PC-9 (cell line): ENCODE measurements at regions of chr10 and their contacts with region 1.

Region 1: DNA sequence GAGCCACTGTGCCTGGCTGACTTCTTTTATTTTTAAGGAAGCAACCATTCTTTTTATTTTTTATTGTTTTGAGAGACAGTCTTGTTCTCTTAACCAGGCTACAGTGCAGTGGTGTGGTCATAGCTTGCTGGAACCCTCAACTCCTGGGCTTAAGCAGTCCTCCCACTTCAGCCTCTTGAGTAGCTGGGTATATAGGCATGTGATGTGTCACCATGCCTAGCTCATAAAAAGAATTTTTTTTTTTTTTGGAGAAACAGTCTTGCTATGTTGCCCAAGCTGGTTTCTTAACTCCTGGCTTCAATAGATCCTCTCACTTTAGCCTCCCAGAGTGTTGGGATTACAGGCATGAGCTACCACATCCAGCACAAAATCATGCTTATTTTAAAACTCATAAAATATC is 5.8 kb downstream of the MCU start:
- DNase-seq: no peak
- H3K4me3 ChIP-seq: no peak overlapping the region
- H3K27ac ChIP-seq: no peak overlapping the region
- H3K4me1 ChIP-seq: peaks cover 27% of the 10 kb centered on the region
- H3K27me3 ChIP-seq: no peaks in the 10 kb centered on the region
- CTCF ChIP-seq: no peak

Region 2: GRCh38 chr10:71351628-71352319 is 1345.9 kb before region 1 on chr10:
- CTCF ChIA-PET with region 1: no interaction called
- POLR2A ChIA-PET with region 1: no interaction called
- intact Hi-C with region 1: no loop called
- DNase-seq: no peak
- H3K4me3 ChIP-seq: no peak overlapping the region
- H3K27ac ChIP-seq: no peak overlapping the region
- H3K4me1 ChIP-seq: peaks cover 31% of the 10 kb centered on the region
- H3K27me3 ChIP-seq: no peaks in the 10 kb centered on the region
- CTCF ChIP-seq: no peak

Region 3: DNA sequence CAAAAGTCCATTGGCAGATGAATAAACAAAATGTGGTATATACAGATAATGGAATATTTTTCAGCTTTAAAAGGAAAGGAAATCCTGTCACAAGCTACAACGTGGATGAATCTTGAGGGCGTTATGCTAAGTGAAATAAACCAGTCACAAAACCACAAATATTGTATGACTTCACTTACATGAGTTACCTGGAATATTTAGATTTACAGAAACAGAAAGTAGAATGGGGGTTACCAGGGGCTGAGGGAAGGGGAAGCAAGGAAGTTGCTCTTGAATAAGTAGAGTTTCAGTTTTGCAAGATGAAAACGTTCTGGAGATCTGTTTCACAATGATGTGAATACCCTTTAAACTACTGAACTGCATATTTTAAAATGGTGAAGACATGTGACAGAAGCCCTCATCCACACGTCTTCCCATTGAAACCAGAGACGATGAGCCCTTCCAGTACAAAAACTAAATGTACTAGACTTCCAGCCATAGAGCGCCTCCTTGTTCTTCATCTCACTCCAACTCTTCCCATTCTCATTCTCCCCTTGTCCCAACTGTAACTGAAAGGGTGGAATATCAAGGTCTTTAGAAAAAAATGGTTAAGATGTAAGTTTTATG is 134.3 kb before region 1 on chr10:
- CTCF ChIA-PET with region 1: no interaction called
- POLR2A ChIA-PET with region 1: no interaction called
- intact Hi-C with region 1: no loop called
- DNase-seq: no peak
- H3K4me3 ChIP-seq: no peak overlapping the region
- H3K27ac ChIP-seq: no peak overlapping the region
- H3K4me1 ChIP-seq: no peaks in the 10 kb centered on the region
- H3K27me3 ChIP-seq: no peaks in the 10 kb centered on the region
- CTCF ChIP-seq: no peak

Region 4: DNA sequence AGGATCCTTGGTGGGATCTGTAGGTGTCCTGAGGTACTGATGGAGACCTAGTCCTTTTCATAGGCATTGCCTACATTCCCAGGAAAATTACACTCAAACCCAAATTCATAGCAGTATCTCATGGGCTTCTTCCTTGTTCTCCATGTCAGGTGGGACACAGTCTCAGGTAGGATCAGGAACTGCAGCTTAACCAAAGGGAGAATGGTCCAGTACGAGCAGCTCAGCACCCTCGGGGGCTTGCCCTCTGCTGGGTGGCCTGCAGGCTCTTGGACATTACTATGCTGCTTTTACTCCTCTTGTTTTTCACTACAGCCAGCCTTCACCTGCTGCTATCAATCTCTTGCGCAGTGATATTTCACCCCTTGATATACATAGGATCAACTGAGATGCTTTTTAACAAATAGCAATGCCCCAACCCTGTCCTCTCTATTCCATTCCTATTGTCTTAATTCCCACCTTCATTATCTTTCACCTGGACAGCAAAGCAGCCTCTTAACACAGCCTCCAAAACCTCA is 228.3 kb after region 1 on chr10:
- CTCF ChIA-PET with region 1: interaction called, 10 read pairs
- POLR2A ChIA-PET with region 1: no interaction called
- intact Hi-C with region 1: no loop called
- DNase-seq: no peak
- H3K4me3 ChIP-seq: no peak overlapping the region
- H3K27ac ChIP-seq: no peak overlapping the region
- H3K4me1 ChIP-seq: no peaks in the 10 kb centered on the region
- H3K27me3 ChIP-seq: no peaks in the 10 kb centered on the region
- CTCF ChIP-seq: no peak